Endothelial cell of umbilical vein (primary cell): ENCODE measurements at regions of chr11 and their contacts with region 1.

Region 1: DNA sequence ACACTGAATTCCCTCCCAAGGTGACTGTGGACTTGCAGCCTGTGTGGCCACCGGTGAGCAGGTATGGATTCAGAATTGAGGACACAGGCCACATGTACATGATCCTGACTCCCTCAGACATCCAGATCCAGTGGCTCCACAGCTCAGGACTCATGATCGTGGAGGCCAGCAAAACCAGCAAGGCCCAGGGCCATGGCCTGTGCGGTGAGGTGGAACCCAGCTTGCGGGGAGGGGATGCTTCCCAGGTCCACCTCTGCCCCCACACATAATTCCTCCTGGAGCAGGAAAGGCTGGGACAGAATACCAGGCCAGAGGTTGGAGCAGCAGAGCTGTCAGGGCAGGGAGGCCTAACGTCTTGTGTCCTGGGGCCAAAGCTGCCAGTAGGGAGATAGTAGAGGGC is 82.1 kb downstream of the OTOG start:
- DNase-seq: no peak
- H3K4me3 ChIP-seq: no peak overlapping the region
- H3K27ac ChIP-seq: no peak overlapping the region
- H3K4me1 ChIP-seq: no peaks in the 10 kb centered on the region
- H3K27me3 ChIP-seq: peaks cover 1 to 5% of the 10 kb centered on the region in 2 experiments
- CTCF ChIP-seq: no peak
- POLR2A ChIP-seq: no peak

Region 2: GRCh38 chr11:19306179-19306944 is 1677.2 kb after region 1 on chr11:
- CTCF ChIA-PET with region 1: no interaction called
- POLR2A ChIA-PET with region 1: no interaction called
- dilution Hi-C with region 1: no loop called
- intact Hi-C with region 1: loop called (anchors 10 kb)
- DNase-seq: no peak
- H3K4me3 ChIP-seq: no peak overlapping the region
- H3K27ac ChIP-seq: no peak overlapping the region
- H3K4me1 ChIP-seq: no peaks in the 10 kb centered on the region
- H3K27me3 ChIP-seq: peaks cover 11 to 17% of the 10 kb centered on the region in 2 experiments
- CTCF ChIP-seq: no peak
- POLR2A ChIP-seq: no peak